PC-9 (cell line): ENCODE measurements at regions of chr10 and their contacts with region 1.

Region 1: DNA sequence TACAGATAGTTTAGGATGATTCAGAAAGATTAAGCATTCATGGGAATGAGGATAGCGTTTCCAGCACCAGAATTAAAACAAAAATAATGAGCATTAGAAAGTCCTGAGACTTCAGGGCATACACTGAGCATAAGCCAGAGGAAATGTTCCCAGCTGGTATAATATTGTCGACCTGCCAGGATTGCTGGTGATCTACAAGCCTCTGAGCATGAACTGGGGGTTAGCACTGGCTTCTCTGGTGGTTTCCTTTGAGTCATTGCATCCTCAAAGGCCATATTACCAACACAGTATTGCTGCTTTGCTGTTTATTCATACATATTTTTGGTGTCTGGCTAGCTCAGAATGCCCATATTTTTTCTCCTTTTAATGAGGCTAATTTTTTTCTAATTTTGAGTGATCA is 10.7 kb upstream of the ATRNL1 start:
- DNase-seq: no peak
- H3K4me3 ChIP-seq: no peak overlapping the region
- H3K27ac ChIP-seq: no peak overlapping the region
- H3K4me1 ChIP-seq: no peaks in the 10 kb centered on the region
- H3K27me3 ChIP-seq: no peaks in the 10 kb centered on the region
- CTCF ChIP-seq: no peak

Region 2: DNA sequence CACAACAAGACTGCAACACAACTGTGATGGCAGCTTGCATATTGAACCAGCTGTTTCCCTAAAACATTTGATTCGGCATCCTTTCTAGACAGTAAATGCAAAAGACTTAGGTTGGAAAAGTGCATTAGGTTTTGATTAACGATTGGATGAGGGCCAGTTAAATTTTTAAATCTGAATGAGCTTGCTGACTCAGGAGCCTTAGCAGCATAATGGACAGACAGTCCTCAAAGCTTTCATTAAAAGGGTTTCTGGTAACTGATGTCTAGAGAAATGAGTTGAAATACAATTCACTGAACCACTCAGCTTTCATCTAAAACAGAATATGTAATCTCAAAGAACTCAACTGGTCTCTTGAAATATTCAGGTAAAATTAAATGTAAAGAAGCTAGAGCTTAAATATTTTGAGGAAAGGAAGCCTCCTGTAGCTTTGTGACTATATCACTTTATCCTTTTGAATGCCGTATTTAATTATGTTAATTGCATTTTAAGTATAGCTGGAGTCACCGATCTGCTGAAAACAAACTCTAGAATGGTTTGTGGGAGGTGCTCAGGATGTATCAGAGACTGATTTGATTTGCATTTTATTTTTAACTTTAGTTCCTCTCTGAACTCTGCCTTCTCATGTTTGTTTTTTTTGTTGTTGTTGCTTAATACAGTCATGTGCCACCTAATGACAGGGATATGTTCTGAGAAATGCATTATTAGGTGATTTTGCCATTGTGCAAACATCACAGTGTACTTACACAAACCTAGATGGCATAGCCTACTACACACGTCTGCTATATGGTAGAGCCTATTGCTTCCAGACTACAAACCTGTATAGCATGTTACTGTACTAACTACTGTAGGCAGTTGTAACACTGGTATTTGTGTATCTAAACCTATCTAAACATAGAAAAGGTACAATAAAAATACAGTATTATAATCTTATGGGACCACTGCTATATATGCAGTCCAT is 18.5 kb before region 1 on chr10:
- CTCF ChIA-PET with region 1: no interaction called
- POLR2A ChIA-PET with region 1: interaction called, 11 read pairs
- intact Hi-C with region 1: no loop called
- DNase-seq: no peak
- H3K4me3 ChIP-seq: no peak overlapping the region
- H3K27ac ChIP-seq: no peak overlapping the region
- H3K4me1 ChIP-seq: no peaks in the 10 kb centered on the region
- H3K27me3 ChIP-seq: peaks cover 44% of the 10 kb centered on the region
- CTCF ChIP-seq: no peak

Region 3: DNA sequence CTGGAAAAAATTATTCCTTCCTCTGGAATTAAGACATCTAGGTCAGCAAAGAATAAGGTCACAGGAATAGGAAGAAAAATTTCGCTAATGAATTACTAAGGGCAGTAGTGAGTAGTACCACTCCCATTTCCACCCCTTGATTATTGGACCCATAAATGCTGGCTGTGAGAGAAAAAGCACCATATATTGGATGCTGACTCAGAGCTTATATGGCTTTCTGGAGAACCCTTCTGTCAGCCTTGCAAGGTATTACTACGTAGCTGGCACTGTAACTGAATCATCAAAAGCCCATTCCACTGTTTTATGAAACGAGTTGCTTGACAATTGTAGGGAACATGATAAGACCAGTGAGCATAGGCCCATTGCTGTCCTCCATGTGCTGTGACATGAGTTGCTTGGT is 190.0 kb after region 1 on chr10:
- CTCF ChIA-PET with region 1: no interaction called
- POLR2A ChIA-PET with region 1: no interaction called
- intact Hi-C with region 1: no loop called
- DNase-seq: no peak
- H3K4me3 ChIP-seq: no peak overlapping the region
- H3K27ac ChIP-seq: no peak overlapping the region
- H3K4me1 ChIP-seq: no peaks in the 10 kb centered on the region
- H3K27me3 ChIP-seq: no peaks in the 10 kb centered on the region
- CTCF ChIP-seq: no peak